Natural killer cell (primary cell): ENCODE measurements at regions of chr2 and their contacts with region 1.

Region 1: GRCh38 chr2:241637000-241637791 is at the starts of genes ATG4B and THAP4:
- DNase-seq: peak; percentile 79 to 88
- ATAC-seq: peak; percentile 73 to 86 (median 80)
- H3K4me3 ChIP-seq: peak within 1 kb of the TSS; percentile 97
- H3K4me3 Mint-ChIP-seq: peak within 1 kb of the TSS; percentile 93
- H3K27ac ChIP-seq: peak within 1 kb of the TSS; percentile 97
- H3K27ac Mint-ChIP-seq: peak within 1 kb of the TSS; percentile 81 to 91
- H3K4me1 ChIP-seq: peaks cover 35% of the 10 kb centered on the region
- H3K4me1 Mint-ChIP-seq: peaks cover 48 to 51% of the 10 kb centered on the region in 2 donors
- H3K27me3 ChIP-seq: no peaks in the 10 kb centered on the region
- H3K27me3 Mint-ChIP-seq: no peaks in the 10 kb centered on the region
- CTCF ChIP-seq: no peak
- total RNA-seq, gene ATG4B: 106 to 171 (median 139) TPM
- total RNA-seq, gene THAP4: 19.8 to 29.2 (median 27.8) TPM

Region 2: DNA sequence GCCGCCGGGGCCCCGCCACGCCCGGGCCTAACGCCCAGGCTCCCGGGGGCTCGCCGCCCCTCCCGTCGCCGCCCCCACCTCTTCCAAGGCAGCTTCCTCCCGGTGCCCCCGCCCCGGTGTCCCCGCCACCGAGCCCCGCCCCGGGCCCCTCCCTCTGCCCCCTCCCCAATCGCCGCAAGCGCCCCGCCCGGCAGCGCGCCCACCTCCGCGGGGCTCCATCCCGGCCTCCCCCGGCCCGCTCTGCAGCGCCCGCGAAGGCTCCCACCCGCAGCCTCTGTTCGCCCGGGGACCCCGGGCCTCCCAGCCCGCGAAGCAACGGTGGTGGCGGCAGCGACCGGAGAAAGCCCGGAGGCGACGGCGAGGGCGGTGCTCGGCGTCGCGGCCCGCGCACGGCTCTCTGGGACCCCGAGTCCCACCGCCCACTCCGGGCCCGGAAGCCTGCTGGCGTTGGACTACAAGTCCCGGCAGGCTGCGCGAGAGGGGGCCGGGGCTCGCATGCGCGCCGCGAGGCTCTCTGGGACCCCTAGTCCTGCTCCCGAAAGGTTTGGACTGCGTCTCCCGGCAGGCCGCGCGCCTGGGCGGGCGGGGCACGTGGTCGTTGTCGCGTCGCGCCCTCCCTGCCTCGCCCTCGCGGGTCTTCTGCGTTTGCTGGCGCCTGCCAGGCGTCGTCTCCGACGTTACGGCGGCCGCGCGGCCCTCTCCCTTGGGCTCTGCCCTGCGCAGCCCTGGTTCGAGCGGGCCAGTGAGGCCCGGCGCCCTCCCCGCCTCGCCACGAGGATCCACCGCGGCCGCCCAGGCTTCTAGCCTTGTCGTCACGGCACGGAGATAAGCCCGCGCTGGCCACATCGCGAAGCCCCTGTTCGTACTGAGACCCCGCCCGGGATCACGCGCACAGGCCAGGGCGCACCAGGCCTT is 128.7 kb before region 1 on chr2 and contains the start of gene STK25:
- intact Hi-C with region 1: loop called (anchors 5 kb)
- DNase-seq: peak; percentile 92 to 98
- ATAC-seq: peak; percentile 94 to 98 (median 95)
- H3K4me3 ChIP-seq: peak within 1 kb of the TSS; percentile 70
- H3K4me3 Mint-ChIP-seq: peak within 1 kb of the TSS; percentile 83
- H3K27ac ChIP-seq: peak within 1 kb of the TSS; percentile 83
- H3K27ac Mint-ChIP-seq: peak within 1 kb of the TSS; percentile 80 to 82
- H3K4me1 ChIP-seq: peaks cover 24% of the 10 kb centered on the region
- H3K4me1 Mint-ChIP-seq: peaks cover 7 to 31% of the 10 kb centered on the region in 2 donors
- H3K27me3 ChIP-seq: no peaks in the 10 kb centered on the region
- H3K27me3 Mint-ChIP-seq: no peaks in the 10 kb centered on the region
- CTCF ChIP-seq: peak; percentile 23
- total RNA-seq, gene STK25: 110 to 140 (median 135) TPM

Region 3: DNA sequence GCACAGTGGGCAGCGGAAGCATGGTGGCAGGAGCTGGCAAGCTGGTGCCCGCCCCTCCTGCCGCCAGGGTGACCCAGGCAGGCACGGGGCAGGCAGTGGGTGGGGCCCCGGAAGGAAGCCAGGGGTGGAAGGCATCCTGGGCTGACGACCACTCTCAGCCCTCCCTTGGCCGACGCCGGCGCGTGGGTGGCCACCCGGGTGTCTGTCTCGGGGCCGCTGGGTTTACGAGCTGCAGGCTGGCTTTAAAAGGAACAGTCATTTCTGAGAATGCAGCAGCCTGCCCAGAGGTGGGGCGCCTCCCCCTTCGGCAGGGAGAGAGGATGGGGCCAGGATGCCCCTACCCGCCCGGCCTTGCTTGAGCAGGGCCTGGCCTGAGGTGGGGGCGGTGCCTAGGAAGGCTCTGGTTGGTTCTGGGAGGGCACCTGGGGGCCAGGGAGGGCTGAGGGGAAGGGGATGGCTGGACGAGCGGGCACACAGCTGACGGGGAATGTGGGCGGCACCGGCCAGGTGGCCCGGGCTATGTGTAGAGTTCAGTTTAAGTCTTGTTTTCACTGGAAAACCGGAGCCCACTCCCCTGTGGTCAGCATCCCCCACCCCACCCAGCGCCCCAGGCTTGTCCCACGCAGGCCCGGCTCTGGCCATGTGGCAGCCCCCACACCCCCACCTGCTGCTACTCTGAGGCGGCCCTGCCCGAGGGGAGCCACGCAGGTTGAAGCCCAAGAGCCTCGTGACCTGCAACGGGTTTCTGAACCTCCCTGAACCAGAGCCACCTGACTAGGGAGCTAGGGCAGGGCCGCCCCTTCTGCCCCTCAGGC is 72.4 kb before region 1 on chr2:
- intact Hi-C with region 1: no loop called
- DNase-seq: no peak
- ATAC-seq: peak; percentile 26 to 52 (median 47)
- H3K4me3 ChIP-seq: no peak overlapping the region
- H3K4me3 Mint-ChIP-seq: no peak overlapping the region
- H3K27ac ChIP-seq: no peak overlapping the region
- H3K27ac Mint-ChIP-seq: peak overlapping the region in 1 of 2 donors; percentile 57
- H3K4me1 ChIP-seq: peaks cover 23% of the 10 kb centered on the region
- H3K4me1 Mint-ChIP-seq: peaks cover 4 to 11% of the 10 kb centered on the region in 2 donors
- H3K27me3 ChIP-seq: peaks cover under 1% of the 10 kb centered on the region
- H3K27me3 Mint-ChIP-seq: peaks cover 0 to 5% of the 10 kb centered on the region in 2 donors
- CTCF ChIP-seq: no peak

Region 4: GRCh38 chr2:241617431-241618154 is 19.6 kb before region 1 on chr2:
- intact Hi-C with region 1: loop called (anchors 2 kb)
- DNase-seq: peak in 1 of 2 donors; percentile 81
- ATAC-seq: peak; percentile 61 to 90 (median 84)
- H3K4me3 ChIP-seq: peak overlapping the region; percentile 38
- H3K4me3 Mint-ChIP-seq: peak overlapping the region; percentile 90
- H3K27ac ChIP-seq: peak overlapping the region; percentile 8
- H3K27ac Mint-ChIP-seq: peak overlapping the region; percentile 75 to 76
- H3K4me1 ChIP-seq: peaks cover 13% of the 10 kb centered on the region
- H3K4me1 Mint-ChIP-seq: peaks cover 15 to 28% of the 10 kb centered on the region in 2 donors
- H3K27me3 ChIP-seq: no peaks in the 10 kb centered on the region
- H3K27me3 Mint-ChIP-seq: no peaks in the 10 kb centered on the region
- CTCF ChIP-seq: no peak